ENCODE measurements at regions of chr9 and their contacts with region 1.

Region 1: GRCh38 chr9:34701769-34702736 is 7.9 kb downstream of the CCL21 start:
- DNase-seq: peak; percentile 90
- H3K4me3 ChIP-seq: peak overlapping the region; percentile 54 to 58
- H3K27ac ChIP-seq: peak overlapping the region in 1 of 2 experiments; percentile 18; a peak in 2 of 4 replicates
- H3K4me1 ChIP-seq: peaks cover 0 to 4% of the 10 kb centered on the region in 2 experiments; a peak in 1 of 4 replicates
- H3K27me3 ChIP-seq: no peaks in the 10 kb centered on the region
- CTCF ChIP-seq: peak; percentile 98
- EP300 ChIP-seq: 0 out of 4 replicates have a peak, but pooled peaks of 1 of the 2 experiments have one; percentile 24
- RAD21 ChIP-seq: peak; percentile 90

Region 2: DNA sequence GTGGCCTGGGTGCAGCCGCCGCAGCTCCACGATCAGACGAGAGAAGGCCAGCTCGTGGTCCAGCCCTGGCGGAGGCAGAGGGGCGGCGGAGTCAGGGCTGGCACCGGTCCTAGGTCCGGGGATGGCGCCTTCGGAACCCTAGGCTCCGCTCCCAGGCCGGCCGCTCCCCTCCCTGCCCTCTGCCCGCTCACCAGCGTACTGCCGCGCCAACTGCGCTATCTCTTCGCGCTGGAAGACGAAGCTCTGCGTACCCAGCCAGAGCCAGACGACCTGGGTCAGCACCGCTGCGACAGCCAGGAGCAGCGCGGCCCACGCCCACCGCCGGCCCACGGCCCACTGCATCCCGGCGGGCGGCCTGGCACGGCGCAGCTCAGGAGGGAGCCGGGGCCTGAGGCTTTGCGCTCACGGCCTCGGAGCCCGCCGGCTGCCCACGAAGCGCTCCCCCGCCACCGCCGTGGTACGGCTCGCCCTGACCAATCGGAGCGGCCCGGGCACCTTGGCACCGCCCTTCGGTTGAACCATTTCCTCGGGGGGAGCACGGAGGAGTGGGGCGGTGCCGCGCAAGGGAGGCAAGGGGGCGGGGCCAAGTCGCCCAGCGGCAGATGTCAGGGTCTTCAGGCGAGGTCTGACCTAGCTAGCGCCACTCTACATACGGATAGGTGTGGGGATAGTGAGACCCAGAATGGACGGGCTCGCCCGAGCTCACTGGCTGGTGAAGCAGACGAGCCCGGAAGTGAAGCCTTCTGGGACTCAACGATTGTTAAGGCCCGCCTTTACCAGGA is 64.5 kb before region 1 on chr9 and contains the start of gene SIGMAR1:
- CTCF ChIA-PET with region 1: interaction called, 24 read pairs
- POLR2A ChIA-PET with region 1: no interaction called
- DNase-seq: peak; percentile 98
- H3K4me3 ChIP-seq: peak within 1 kb of the TSS; percentile 66 to 69
- H3K27ac ChIP-seq: peak within 1 kb of the TSS; percentile 32 to 72; a peak in 3 of 4 replicates
- H3K4me1 ChIP-seq: peaks cover 4 to 20% of the 10 kb centered on the region in 2 experiments; a peak in 1 of 4 replicates
- H3K27me3 ChIP-seq: no peaks in the 10 kb centered on the region
- CTCF ChIP-seq: no peak
- EP300 ChIP-seq: no peak; a peak in 1 of 4 replicates
- RAD21 ChIP-seq: no peak
- polyA plus RNA-seq, gene SIGMAR1: 73.7 and 79.0 TPM in 2 replicates

Region 3: DNA sequence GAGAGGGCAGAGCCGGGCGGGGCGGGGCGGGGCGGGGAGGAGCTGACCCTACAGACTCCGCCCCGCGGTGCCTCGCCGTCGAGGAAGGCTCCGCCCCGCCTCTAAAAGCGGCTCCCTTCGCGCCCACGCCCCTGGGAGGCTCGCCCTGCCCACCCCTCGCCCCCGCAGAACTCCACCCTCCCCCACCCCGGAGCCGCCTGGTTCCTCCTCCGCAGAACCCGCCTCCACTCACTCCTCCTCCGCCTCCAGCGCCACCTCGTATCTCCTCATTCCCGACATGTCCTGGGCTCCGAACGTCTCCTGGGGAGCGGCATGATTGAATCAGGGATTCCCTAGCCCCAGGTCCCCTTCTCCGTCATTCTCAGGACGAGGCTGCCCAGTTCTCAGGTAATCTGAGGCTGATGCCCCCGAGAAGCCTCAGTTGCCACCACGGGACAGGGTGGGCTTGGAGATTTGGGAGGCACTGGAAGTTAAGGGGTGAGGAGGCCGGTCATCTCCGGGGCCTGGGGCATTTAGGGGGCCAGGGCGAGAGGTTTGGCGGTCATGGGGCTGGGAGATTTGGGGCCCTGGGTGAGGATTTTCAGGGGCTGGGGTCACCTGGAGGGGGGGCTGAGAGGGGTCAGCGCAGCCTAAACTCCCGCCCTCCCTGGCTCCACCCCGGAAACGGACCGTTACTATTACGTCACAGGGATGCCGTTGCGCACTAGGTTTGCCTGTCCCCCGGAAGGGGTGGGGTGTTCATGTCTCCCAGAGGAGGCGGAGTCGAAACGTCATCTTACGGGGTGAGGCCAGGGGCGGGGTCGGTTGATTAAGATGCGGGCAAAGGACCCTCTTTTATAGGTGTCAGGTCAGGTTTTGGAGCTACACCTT is 36.4 kb before region 1 on chr9:
- CTCF ChIA-PET with region 1: interaction called, 56 read pairs
- POLR2A ChIA-PET with region 1: no interaction called
- DNase-seq: peak; percentile 96
- H3K4me3 ChIP-seq: peak overlapping the region; percentile 89 to 100
- H3K27ac ChIP-seq: peak overlapping the region; percentile 95 to 99
- H3K4me1 ChIP-seq: peaks cover 8 to 12% of the 10 kb centered on the region in 2 experiments; a peak in 3 of 4 replicates
- H3K27me3 ChIP-seq: no peaks in the 10 kb centered on the region
- CTCF ChIP-seq: no peak
- EP300 ChIP-seq: no peak; a peak in 1 of 4 replicates
- RAD21 ChIP-seq: no peak

Region 4: DNA sequence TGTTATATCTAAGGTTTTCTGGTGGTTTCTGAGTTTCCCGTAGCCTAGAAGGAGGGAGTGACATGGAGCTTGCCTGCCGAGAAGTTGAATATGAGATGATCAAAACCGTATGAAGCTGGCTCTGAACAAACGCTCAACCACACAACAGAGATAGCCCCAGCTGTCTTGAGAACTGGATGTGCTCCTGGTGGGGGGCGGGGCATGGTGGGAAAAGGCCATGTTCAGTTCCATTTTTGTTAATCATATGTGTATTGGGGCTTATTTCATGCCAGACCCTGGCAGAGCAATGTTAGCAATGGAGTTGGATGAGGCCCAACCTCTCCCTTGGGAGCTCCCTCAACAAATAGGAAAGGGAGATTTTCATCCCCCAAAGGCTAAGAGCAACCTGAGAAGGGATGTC is 15.8 kb before region 1 on chr9:
- CTCF ChIA-PET with region 1: interaction called, 43 read pairs
- POLR2A ChIA-PET with region 1: interaction called, 3 read pairs
- DNase-seq: no peak
- H3K4me3 ChIP-seq: no peak overlapping the region
- H3K27ac ChIP-seq: no peak overlapping the region
- H3K4me1 ChIP-seq: no peaks in the 10 kb centered on the region; a peak in 1 of 4 replicates
- H3K27me3 ChIP-seq: no peaks in the 10 kb centered on the region
- CTCF ChIP-seq: no peak
- EP300 ChIP-seq: no peak
- RAD21 ChIP-seq: no peak

Region 5: DNA sequence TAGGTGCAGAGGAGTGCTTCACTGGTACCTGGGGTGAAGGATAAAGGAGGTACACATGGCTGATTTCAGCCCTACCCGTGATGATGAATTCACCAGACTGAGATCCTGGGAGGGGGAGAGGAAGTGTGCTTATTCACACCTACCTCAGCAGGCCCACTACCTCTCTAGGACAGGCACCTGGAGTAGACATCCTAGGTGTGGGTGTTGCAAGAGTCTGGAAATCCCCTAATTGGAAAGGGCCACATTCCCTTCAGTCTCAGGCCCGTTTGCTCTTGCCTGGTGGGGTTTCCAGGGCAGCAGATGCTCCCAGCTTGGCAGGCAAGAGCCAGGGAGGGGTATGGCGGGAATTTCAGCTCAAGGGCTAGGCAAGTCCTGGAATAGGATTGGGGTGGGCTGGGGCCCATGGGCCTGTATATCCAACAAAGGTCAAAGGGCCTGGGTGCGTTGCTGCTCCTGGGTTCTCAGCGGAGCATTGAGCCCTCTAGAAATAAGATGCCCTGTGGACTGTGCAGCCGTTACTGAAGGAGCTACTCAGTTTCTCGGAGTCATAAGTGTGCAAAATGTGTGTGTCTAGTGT is 13.7 kb after region 1 on chr9:
- CTCF ChIA-PET with region 1: interaction called, 42 read pairs
- POLR2A ChIA-PET with region 1: no interaction called
- DNase-seq: no peak
- H3K4me3 ChIP-seq: no peak overlapping the region
- H3K27ac ChIP-seq: no peak overlapping the region
- H3K4me1 ChIP-seq: no peaks in the 10 kb centered on the region
- H3K27me3 ChIP-seq: no peaks in the 10 kb centered on the region; the same call in 1 of the 2 replicates
- CTCF ChIP-seq: no peak
- EP300 ChIP-seq: no peak
- RAD21 ChIP-seq: no peak

Region 6: GRCh38 chr9:34802916-34803315 is 100.9 kb after region 1 on chr9:
- CTCF ChIA-PET with region 1: no interaction called
- POLR2A ChIA-PET with region 1: no interaction called
- DNase-seq: no peak
- H3K4me3 ChIP-seq: no peak overlapping the region
- H3K27ac ChIP-seq: no peak overlapping the region
- H3K4me1 ChIP-seq: no peaks in the 10 kb centered on the region
- H3K27me3 ChIP-seq: no peaks in the 10 kb centered on the region
- CTCF ChIP-seq: no peak
- EP300 ChIP-seq: no peak
- RAD21 ChIP-seq: no peak

Measured in SK-N-SH (cell line).